ENCODE measurements at regions of chr2 and their contacts with region 1.

Region 1: DNA sequence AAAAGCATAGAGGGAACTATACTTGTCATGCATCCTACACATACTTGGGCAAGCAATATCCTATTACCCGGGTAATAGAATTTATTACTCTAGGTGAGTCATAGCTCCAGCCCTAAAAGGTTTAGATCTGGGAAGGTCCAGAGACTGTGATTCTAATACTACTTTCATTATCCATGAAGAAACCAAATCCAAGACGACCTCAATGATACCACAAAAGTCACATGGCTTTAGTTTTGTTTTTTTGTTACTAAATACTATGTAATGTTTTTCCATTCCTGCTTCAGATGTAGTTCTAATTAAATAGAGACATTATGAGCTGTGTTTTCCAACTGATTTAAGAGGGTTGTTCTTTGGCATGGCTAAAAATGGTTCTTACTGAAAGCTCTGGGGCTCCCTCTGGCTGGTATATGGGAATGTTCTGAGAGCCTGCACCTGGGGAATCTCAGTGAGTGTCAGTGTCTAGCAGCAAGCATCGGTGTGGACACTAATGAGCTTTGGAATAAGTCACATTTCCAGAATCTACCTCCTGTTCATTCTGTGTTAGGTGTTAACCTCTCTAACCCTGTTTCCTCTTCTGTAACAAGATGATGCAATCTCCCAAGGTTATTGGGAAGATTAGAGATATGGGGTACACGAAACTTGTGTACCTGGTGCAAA is 20.5 kb upstream of the IL1RL2 start:
- DNase-seq: no peak
- ATAC-seq: no peak
- H3K4me3 ChIP-seq: no peak overlapping the region
- H3K4me3 Mint-ChIP-seq: no peak overlapping the region
- H3K27ac ChIP-seq: no peak overlapping the region
- H3K27ac Mint-ChIP-seq: no peak overlapping the region
- H3K4me1 ChIP-seq: no peaks in the 10 kb centered on the region
- H3K4me1 Mint-ChIP-seq: no peaks in the 10 kb centered on the region
- H3K27me3 ChIP-seq: no peaks in the 10 kb centered on the region
- H3K27me3 Mint-ChIP-seq: peaks cover 3% of the 10 kb centered on the region
- CTCF ChIP-seq: no peak

Region 2: GRCh38 chr2:102050854-102051391 is 115.4 kb before region 1 on chr2:
- CTCF ChIA-PET with region 1: no interaction called
- POLR2A ChIA-PET with region 1: no interaction called
- intact Hi-C with region 1: loop called in 1 of 2 experiments (anchors 5 kb)
- DNase-seq: no peak
- ATAC-seq: no peak
- H3K4me3 ChIP-seq: no peak overlapping the region
- H3K4me3 Mint-ChIP-seq: no peak overlapping the region
- H3K27ac ChIP-seq: no peak overlapping the region
- H3K27ac Mint-ChIP-seq: no peak overlapping the region
- H3K4me1 ChIP-seq: no peaks in the 10 kb centered on the region
- H3K4me1 Mint-ChIP-seq: peaks cover 5% of the 10 kb centered on the region
- H3K27me3 ChIP-seq: no peaks in the 10 kb centered on the region
- H3K27me3 Mint-ChIP-seq: peaks cover 17% of the 10 kb centered on the region
- CTCF ChIP-seq: no peak